Right ventricle myocardium inferior (tissue), 1 donor: ENCODE measurements at regions of chr1 and their contacts with region 1.

Region 1: DNA sequence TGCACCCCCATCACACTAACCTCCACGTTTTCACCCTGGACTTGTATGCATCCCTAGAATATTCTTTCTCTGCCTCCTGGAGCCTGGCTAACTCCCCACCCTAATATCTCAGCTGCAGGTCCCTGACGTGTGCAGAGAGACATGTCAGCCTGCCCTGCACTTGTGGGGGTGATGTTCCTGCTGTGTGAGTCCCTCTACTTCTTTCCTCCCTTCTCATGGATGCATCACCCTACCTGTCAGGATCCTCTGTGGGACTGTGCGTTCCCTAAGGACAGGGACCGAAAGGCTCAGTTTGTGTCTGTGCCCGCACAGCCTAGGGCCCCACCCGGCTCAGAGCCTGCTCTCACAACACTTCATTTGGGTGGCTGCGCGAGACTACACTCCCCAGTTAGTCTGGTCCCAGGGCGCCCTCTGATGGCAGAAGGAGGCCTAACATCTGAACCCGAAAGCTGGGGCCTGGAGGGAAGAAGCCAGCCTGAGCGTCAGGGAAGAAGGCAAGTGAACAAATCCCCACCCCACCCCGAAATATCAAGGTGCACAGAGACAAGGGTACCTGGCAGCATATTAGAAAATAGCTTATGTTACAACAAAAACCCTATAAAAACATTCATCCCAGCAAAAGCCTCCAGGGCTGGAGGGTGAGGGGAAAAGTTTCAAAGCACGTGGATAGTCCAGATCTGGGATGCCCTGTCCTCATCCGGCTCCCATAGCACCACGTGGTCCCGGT is 3.7 kb downstream of the CD52 start:
- DNase-seq: peak; percentile 97
- ATAC-seq: peak; percentile 93

Region 2: GRCh38 chr1:26102526-26102925 is 219.0 kb before region 1 on chr1:
- intact Hi-C with region 1: loop called (anchors 2 kb)
- DNase-seq: no peak
- ATAC-seq: no peak

Region 3: GRCh38 chr1:26169669-26170471 is 151.6 kb before region 1 on chr1 and contains the start of gene ZNF593:
- intact Hi-C with region 1: loop called (anchors 2 kb)
- DNase-seq: peak; percentile 95
- ATAC-seq: peak; percentile 97
- total RNA-seq, gene ZNF593: 14.9 TPM

Region 4: GRCh38 chr1:26279456-26280332 is 41.8 kb before region 1 on chr1 and contains the start of gene SH3BGRL3:
- intact Hi-C with region 1: loop called (anchors 1 kb)
- DNase-seq: peak; percentile 96
- ATAC-seq: peak; percentile 77
- total RNA-seq, gene SH3BGRL3: 50.5 TPM

Region 5: DNA sequence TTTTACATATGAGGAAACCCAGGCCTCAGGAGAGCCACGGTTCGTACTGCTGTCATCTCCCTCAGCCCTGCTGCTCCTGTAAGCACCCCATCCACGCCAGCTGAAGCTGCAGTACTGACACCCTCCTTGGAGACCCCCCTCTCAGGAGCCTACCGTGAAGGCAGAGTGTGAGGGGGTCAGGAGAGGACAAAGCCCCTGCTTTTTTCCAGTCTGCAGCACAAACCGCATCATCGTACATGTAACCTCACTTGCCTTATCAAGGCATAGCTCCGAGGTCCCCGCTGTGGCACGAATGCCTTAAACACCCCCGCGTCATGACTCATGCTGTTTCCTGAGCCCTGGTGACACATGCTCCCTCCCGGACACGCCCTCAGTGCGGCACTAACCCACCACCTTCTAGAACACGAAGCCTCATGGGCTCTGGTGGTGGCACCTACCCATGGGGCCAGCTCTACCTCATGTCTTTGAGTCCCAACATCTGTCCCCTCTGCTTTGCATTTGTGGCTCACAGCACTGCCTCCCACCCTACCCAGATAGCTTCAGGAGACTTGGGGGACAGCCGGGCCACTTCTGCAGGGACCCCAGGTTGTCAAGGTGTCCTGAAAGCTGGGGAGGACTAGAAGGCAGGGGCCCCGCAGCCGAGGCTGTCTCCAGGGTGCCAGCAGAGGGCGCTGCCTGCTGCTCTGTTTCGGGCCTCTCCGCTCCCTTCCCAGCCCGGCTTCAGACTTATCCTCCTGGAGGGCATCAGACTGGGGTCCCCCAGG is 36.7 kb before region 1 on chr1:
- intact Hi-C with region 1: loop called (anchors 2 kb)
- DNase-seq: peak; percentile 90
- ATAC-seq: no peak